GM10248 (cell line): ENCODE measurements at regions of chr16 and their contacts with region 1.

Region 1: DNA sequence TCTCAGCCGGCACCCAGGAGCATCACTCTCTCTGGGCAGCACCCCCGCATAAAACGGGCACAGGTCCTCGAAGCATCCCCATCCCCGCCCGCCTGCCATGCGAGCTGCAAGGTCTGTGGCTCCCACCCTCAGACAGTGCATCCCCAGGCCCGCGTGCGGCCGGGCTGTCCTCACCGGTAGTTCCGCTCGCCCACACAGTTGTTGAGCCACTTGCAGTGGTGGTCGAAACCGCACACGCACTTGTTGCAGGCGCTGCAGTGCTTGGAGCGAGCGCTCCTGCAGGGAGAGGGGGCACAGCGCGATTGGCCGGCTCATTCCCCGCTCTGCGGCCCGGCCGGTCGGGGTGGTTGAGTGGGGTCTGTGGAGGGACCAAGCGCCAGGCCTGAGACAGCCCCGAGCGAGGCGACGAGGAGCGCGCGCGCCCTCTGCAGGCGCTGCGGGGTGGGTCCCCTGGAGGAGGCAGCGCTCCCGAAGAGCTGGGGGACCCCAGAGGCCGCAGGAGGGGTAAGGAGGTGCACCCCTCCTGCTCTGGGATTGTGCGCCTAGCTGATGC is 6.0 kb upstream of the TPPP3 start:
- DNase-seq: peak; percentile 85
- CTCF ChIP-seq: peak; percentile 70

Region 2: GRCh38 chr16:67383284-67383683 is 16.0 kb before region 1 on chr16:
- CTCF ChIA-PET with region 1: interaction called, 24 read pairs
- POLR2A ChIA-PET with region 1: no interaction called
- DNase-seq: no peak
- CTCF ChIP-seq: no peak

Region 3: DNA sequence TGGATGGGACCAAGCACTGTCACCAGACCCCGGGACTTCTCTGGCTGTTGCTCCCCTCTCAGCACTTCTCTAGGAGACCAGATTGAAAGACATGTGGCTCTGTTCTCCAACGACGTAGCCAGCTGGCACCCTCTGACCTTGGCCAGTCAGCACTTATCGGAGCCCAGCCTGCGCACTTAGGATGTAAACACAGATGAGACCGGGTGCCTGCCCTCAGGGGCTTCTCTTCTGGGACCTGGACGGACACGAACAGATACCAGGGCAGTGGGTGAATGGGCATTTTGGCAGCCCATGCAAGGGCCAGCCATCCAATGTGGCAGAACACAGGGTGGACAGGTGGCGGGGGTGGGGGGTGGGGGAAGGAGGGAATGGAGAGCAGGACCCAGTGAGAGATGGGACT is 10.4 kb after region 1 on chr16:
- CTCF ChIA-PET with region 1: interaction called, 11 read pairs
- POLR2A ChIA-PET with region 1: no interaction called
- DNase-seq: no peak
- CTCF ChIP-seq: no peak

Region 4: GRCh38 chr16:67846320-67847063 is 447.2 kb after region 1 on chr16 and contains the start of gene NUTF2:
- CTCF ChIA-PET with region 1: no interaction called
- POLR2A ChIA-PET with region 1: no interaction called
- DNase-seq: peak; percentile 95
- CTCF ChIP-seq: no peak